ENCODE measurements at regions of chr18 and their contacts with region 1.

Region 1: DNA sequence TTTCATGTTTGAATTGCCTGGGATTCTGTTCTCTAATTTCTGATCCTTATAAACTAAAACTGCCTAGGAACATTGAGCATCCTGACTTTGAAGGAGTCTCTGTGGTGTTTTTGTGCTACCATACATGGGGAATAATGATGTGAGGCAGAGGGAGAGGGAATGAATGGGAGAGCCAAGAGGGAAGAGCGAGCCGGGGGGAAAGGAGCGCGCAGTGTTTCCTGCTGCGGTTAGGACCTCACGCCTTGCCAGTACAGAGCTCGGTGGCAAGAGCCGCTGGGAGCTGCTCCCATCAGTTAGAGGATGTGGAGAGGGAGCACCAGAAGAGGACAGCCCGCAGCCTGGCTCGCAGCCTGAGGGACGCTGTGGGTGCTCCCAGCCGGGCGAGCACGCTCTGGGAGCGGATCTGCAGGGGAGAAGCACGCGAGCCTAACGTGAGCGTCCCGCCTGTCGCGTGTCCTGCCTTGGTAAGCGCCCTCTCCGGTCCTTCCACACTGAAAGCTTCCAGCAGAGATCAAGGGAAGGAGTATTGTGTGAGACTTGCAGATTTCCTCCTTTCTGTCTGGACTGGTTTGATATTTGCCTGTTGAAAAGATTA is 114.7 kb downstream of the FAM210A start:
- DNase-seq: peak; percentile 67 to 87 (median 81)
- ATAC-seq: peak; percentile 77 to 83 (median 80)
- H3K4me3 ChIP-seq: peak overlapping the region in 11 of 12 donors; percentile 23 to 58 (median 46)
- H3K27ac ChIP-seq: peak overlapping the region; percentile 68 to 93 (median 81)
- H3K4me1 ChIP-seq: peaks cover 3 to 81% (median 43%) of the 10 kb centered on the region in 12 donors
- H3K27me3 ChIP-seq: no peaks in the 10 kb centered on the region
- CTCF ChIP-seq: no peak
- POLR2A ChIP-seq: no peak

Region 2: DNA sequence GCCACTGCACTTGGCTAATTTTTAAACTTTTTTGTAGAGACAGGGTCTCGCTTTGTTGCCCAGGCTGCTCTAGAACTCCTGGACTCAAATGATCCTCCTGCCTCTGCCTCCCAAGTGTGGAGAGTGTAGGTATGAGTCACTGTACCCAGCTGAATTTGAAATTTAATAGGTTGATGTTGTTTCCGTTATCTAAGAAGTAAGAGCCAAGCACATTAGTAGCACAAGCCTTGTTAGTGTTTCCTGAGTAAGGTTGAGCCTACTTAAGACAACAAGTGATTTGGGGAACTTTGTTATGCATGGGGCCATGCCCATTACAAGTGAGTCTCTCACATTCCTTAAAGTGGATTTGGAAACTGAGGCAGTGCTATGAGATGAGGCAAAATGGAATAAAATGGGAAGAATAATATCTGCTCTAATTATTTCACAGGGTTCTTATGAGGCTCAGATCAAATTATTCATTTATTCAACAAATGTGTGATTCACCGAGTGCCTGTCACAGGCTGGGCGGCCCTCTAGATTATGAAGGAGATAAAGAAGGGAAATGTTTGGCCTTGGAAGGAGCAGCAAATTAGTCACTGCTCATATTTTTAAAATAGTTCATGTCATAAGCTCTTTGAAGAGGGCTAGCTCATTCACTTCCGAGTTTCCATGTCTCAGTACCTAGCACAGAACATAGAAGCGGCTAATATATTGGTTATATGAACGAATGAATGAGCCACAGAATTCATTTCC is 175.9 kb before region 1 on chr18:
- intact Hi-C with region 1: loop called in 1 of 10 experiments (anchors 10 kb)
- DNase-seq: no peak
- ATAC-seq: peak; percentile 35 to 76 (median 64)
- H3K4me3 ChIP-seq: no peak overlapping the region
- H3K27ac ChIP-seq: peak overlapping the region in 8 of 12 donors; percentile 23 to 61 (median 41)
- H3K4me1 ChIP-seq: peaks cover 0 to 45% (median 25%) of the 10 kb centered on the region in 12 donors
- H3K27me3 ChIP-seq: no peaks in the 10 kb centered on the region
- CTCF ChIP-seq: no peak
- POLR2A ChIP-seq: no peak

Region 3: GRCh38 chr18:13447626-13448334 is 163.9 kb before region 1 on chr18:
- intact Hi-C with region 1: loop called in 1 of 10 experiments (anchors 10 kb)
- DNase-seq: peak in 3 of 5 donors; percentile 49 to 63 (median 58)
- ATAC-seq: peak in 3 of 4 donors; percentile 31 to 59 (median 39)
- H3K4me3 ChIP-seq: peak overlapping the region in 2 of 12 donors; percentile 0 to 22
- H3K27ac ChIP-seq: peak overlapping the region in 3 of 12 donors; percentile 12 to 51 (median 32)
- H3K4me1 ChIP-seq: peaks cover 0 to 57% (median 27%) of the 10 kb centered on the region in 12 donors
- H3K27me3 ChIP-seq: no peaks in the 10 kb centered on the region
- CTCF ChIP-seq: no peak
- POLR2A ChIP-seq: no peak

Region 4: DNA sequence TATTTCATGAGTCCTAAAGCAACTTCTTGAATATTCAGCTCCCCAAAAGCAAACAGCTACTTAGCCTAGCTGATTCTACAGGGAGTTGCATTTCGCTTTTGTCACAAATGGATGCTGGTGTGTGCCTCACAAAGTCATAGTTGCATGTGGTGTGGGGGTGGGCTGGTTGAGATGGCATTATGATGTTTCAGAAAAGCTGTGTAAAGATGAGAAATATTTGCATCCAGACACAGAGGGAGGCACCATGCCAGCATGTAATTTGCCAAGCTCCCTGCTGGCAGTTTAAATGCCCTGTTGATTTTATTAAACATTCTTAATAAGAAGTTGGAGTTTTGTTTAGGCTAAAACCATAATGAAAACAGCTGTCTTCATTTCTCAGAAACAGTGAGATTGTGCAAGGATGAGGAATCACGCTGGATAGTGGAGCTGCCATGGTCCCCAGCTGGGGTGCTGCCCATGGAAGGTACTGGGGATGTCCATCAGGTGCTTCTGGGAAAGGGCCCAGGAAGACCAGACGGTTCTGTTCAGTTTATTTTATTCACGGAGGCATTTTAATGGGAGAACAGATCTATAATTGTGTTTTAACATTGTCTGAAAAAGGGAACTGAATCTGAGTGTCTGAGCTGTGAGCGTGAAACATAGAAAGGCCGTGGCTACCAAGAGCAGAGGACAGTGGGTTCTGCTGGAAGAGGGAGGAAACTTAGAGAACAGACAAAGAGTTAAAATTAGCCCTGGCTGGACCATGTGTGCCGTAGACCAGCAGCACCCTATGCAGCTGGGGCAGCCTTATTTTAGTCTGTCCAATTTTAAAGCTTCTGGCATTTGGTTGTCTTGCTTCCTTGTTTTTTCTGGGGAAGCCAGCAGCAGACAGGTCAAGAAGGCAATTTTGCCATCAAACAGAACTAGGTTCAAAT is 62.5 kb before region 1 on chr18:
- intact Hi-C with region 1: loop called in 1 of 10 experiments (anchors 5 kb)
- DNase-seq: no peak
- ATAC-seq: peak; percentile 45 to 69 (median 63)
- H3K4me3 ChIP-seq: no peak overlapping the region
- H3K27ac ChIP-seq: peak overlapping the region in 10 of 12 donors; percentile 16 to 81 (median 36)
- H3K4me1 ChIP-seq: peaks cover 2 to 74% (median 27%) of the 10 kb centered on the region in 12 donors
- H3K27me3 ChIP-seq: no peaks in the 10 kb centered on the region
- CTCF ChIP-seq: no peak
- POLR2A ChIP-seq: no peak

Region 5: DNA sequence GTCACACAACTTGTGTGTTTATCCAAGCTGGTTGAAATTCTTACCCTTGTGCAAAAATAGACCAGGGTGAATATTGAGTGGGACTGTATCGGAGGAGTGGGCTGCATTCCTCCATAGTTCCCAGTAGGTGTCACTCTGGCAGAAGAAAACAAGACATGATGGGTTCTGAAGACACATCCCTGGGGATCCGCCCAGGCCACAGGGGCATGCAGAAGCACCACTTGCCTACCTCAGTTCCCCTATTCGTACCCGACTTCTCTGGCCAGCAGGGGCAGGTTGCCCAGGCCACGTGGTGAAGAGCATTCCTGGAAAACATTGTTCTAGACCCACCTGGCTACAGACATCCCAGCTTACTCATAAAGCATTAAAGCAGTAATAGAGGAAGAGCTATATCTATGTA is 53.6 kb before region 1 on chr18:
- intact Hi-C with region 1: loop called in 6 of 10 experiments (anchors 2 to 10 kb)
- DNase-seq: peak in 4 of 5 donors; percentile 45 to 72 (median 60)
- ATAC-seq: peak; percentile 73 to 84 (median 76)
- H3K4me3 ChIP-seq: no peak overlapping the region
- H3K27ac ChIP-seq: peak overlapping the region in 5 of 12 donors; percentile 23 to 59 (median 32)
- H3K4me1 ChIP-seq: peaks cover 3 to 68% (median 29%) of the 10 kb centered on the region in 12 donors
- H3K27me3 ChIP-seq: no peaks in the 10 kb centered on the region
- CTCF ChIP-seq: peak; percentile 48 to 75 (median 64)
- POLR2A ChIP-seq: no peak

Region 6: DNA sequence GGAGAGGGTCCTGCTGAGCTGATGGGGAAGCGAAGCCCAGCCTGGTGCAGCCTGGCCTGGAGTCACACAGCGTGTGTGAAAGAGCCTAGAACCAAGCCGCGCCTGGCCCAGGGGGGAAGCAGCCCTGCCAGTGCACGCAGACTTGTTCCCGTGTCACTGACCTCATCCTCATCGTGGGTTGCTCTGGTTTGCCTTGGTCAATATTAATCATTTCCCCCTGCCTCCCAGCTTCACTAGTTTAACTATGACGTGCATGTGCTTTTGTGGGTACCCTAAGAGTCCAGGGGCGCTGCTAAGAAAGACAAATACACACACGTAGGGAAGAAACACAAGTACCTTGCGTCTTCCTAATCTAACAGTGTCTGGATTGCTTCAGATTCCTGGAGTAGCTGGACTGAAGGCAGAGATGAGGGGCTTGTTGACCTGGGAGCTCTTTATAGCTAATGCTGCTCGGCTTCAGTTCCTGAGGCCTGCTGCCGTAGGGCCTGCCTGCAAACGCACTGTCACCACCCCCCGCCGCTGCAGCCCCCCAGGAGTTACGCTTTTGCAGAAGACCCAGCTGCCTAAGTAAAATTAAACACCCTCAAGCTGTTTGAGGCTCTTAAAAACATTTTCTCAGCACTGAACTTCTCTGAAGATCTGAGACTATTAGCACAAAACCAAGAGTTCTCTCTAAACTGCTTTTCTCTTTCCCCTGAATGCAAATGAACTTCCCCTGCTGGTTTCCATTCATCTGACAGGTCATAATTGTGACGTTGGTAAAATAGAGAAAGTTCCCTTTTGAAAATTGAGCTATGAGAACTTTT is 44.6 kb before region 1 on chr18:
- intact Hi-C with region 1: loop called in 7 of 10 experiments (anchors 1 to 10 kb)
- DNase-seq: peak in 3 of 5 donors; percentile 56 to 79 (median 73)
- ATAC-seq: peak in 3 of 4 donors; percentile 6 to 10 (median 6)
- H3K4me3 ChIP-seq: peak overlapping the region in 1 of 12 donors; percentile 25
- H3K27ac ChIP-seq: peak overlapping the region in 8 of 12 donors; percentile 22 to 94 (median 72)
- H3K4me1 ChIP-seq: peaks cover 0 to 73% (median 41%) of the 10 kb centered on the region in 12 donors
- H3K27me3 ChIP-seq: no peaks in the 10 kb centered on the region
- CTCF ChIP-seq: no peak
- POLR2A ChIP-seq: no peak

Measured in heart left ventricle (tissue), 16 donors.